ENCODE measurements at regions of chr6 and their contacts with region 1.

Region 1: GRCh38 chr6:138115877-138116660 is 8.8 kb upstream of the PERP start:
- DNase-seq: peak in 11 of 14 experiments; percentile 13 to 83 (median 32)
- ATAC-seq: peak; percentile 91
- H3K4me3 ChIP-seq: no peak overlapping the region
- H3K4me3 Mint-ChIP-seq: no peak overlapping the region
- H3K27ac ChIP-seq: no peak overlapping the region
- H3K27ac Mint-ChIP-seq: no peak overlapping the region
- H3K4me1 ChIP-seq: no peaks in the 10 kb centered on the region
- H3K4me1 Mint-ChIP-seq: peaks cover 6% of the 10 kb centered on the region
- H3K27me3 ChIP-seq: no peaks in the 10 kb centered on the region
- H3K27me3 Mint-ChIP-seq: peaks cover 32% of the 10 kb centered on the region
- CTCF ChIP-seq: peak; percentile 90

Region 2: GRCh38 chr6:137878486-137879285 is 237.4 kb before region 1 on chr6:
- CTCF ChIA-PET with region 1: no interaction called
- POLR2A ChIA-PET with region 1: no interaction called
- intact Hi-C with region 1: loop called in 1 of 2 experiments (anchors 5 kb)
- DNase-seq: peak in 4 of 14 experiments; percentile 22 to 62 (median 46)
- ATAC-seq: no peak
- H3K4me3 ChIP-seq: no peak overlapping the region
- H3K4me3 Mint-ChIP-seq: peak overlapping the region; percentile 76
- H3K27ac ChIP-seq: peak overlapping the region in 1 of 2 donors; percentile 37
- H3K27ac Mint-ChIP-seq: peak overlapping the region; percentile 95
- H3K4me1 ChIP-seq: peaks cover 68% of the 10 kb centered on the region
- H3K4me1 Mint-ChIP-seq: peaks cover 88% of the 10 kb centered on the region
- H3K27me3 ChIP-seq: no peaks in the 10 kb centered on the region
- H3K27me3 Mint-ChIP-seq: peaks cover 8% of the 10 kb centered on the region
- CTCF ChIP-seq: no peak

Region 3: GRCh38 chr6:138403801-138404661 is 288.0 kb after region 1 on chr6 and contains the start of gene HEBP2:
- CTCF ChIA-PET with region 1: no interaction called
- POLR2A ChIA-PET with region 1: no interaction called
- intact Hi-C with region 1: loop called (anchors 5 to 10 kb)
- DNase-seq: peak; percentile 77 to 97 (median 94)
- ATAC-seq: peak; percentile 93
- H3K4me3 ChIP-seq: peak within 1 kb of the TSS; percentile 91
- H3K4me3 Mint-ChIP-seq: peak within 1 kb of the TSS; percentile 87
- H3K27ac ChIP-seq: peak within 1 kb of the TSS; percentile 61 to 75
- H3K27ac Mint-ChIP-seq: peak within 1 kb of the TSS; percentile 86
- H3K4me1 ChIP-seq: peaks cover 27% of the 10 kb centered on the region
- H3K4me1 Mint-ChIP-seq: peaks cover 21% of the 10 kb centered on the region
- H3K27me3 ChIP-seq: no peaks in the 10 kb centered on the region
- H3K27me3 Mint-ChIP-seq: no peaks in the 10 kb centered on the region
- CTCF ChIP-seq: peak; percentile 48
- total RNA-seq, gene HEBP2: 31.8 to 32.9 TPM

Region 4: GRCh38 chr6:138517635-138518034 is 401.6 kb after region 1 on chr6:
- CTCF ChIA-PET with region 1: interaction called, 15 read pairs
- POLR2A ChIA-PET with region 1: interaction called, 5 read pairs
- intact Hi-C with region 1: loop called (anchors 1 kb)
- DNase-seq: peak; percentile 28 to 78 (median 44)
- ATAC-seq: peak; percentile 81
- H3K4me3 ChIP-seq: no peak overlapping the region
- H3K4me3 Mint-ChIP-seq: no peak overlapping the region
- H3K27ac ChIP-seq: no peak overlapping the region
- H3K27ac Mint-ChIP-seq: no peak overlapping the region
- H3K4me1 ChIP-seq: peaks cover 6% of the 10 kb centered on the region
- H3K4me1 Mint-ChIP-seq: peaks cover 10% of the 10 kb centered on the region
- H3K27me3 ChIP-seq: no peaks in the 10 kb centered on the region
- H3K27me3 Mint-ChIP-seq: peaks cover 15% of the 10 kb centered on the region
- CTCF ChIP-seq: peak; percentile 78

Region 5: GRCh38 chr6:138765896-138766655 is 650.0 kb after region 1 on chr6:
- CTCF ChIA-PET with region 1: interaction called, 10 read pairs
- POLR2A ChIA-PET with region 1: no interaction called
- intact Hi-C with region 1: loop called (anchors 1 to 2 kb)
- DNase-seq: peak in 4 of 14 experiments; percentile 4 to 54 (median 52)
- ATAC-seq: peak; percentile 41
- H3K4me3 ChIP-seq: no peak overlapping the region
- H3K4me3 Mint-ChIP-seq: no peak overlapping the region
- H3K27ac ChIP-seq: no peak overlapping the region
- H3K27ac Mint-ChIP-seq: no peak overlapping the region
- H3K4me1 ChIP-seq: no peaks in the 10 kb centered on the region
- H3K4me1 Mint-ChIP-seq: no peaks in the 10 kb centered on the region
- H3K27me3 ChIP-seq: no peaks in the 10 kb centered on the region
- H3K27me3 Mint-ChIP-seq: no peaks in the 10 kb centered on the region
- CTCF ChIP-seq: peak; percentile 89